Activated CD8-positive, alpha-beta memory T cell treated with anti-CD3 and anti-CD28 coated beads, Interleukin-2, amount 10 ng/mL, durations not matched to agents 7 days and 5 days (primary cell): ENCODE measurements at regions of chr4 and their contacts with region 1.

Region 1: GRCh38 chr4:88533937-88534750 is 10.6 kb upstream of the PYURF start:
- DNase-seq: no peak
- ATAC-seq: no peak
- H3K4me3 Mint-ChIP-seq: no peak overlapping the region
- H3K27ac Mint-ChIP-seq: no peak overlapping the region
- H3K4me1 Mint-ChIP-seq: no peaks in the 10 kb centered on the region
- H3K27me3 Mint-ChIP-seq: no peaks in the 10 kb centered on the region

Region 2: GRCh38 chr4:88456757-88457306 is 77.3 kb before region 1 on chr4 and contains the start of gene HERC5:
- CTCF ChIA-PET with region 1: no interaction called
- DNase-seq: peak; percentile 96
- ATAC-seq: peak; percentile 90
- H3K4me3 Mint-ChIP-seq: peak within 1 kb of the TSS; percentile 81
- H3K27ac Mint-ChIP-seq: peak within 1 kb of the TSS; percentile 100
- H3K4me1 Mint-ChIP-seq: peaks cover 54% of the 10 kb centered on the region
- H3K27me3 Mint-ChIP-seq: no peaks in the 10 kb centered on the region
- total RNA-seq, gene HERC5: 69.6 to 118 TPM

Region 3: GRCh38 chr4:88523325-88524129 is 10.6 kb before region 1 on chr4 and contains the start of gene PYURF:
- CTCF ChIA-PET with region 1: interaction called, 18 read pairs
- DNase-seq: peak; percentile 87
- ATAC-seq: peak; percentile 87
- H3K4me3 Mint-ChIP-seq: peak within 1 kb of the TSS; percentile 91
- H3K27ac Mint-ChIP-seq: peak within 1 kb of the TSS; percentile 83
- H3K4me1 Mint-ChIP-seq: peaks cover 49% of the 10 kb centered on the region
- H3K27me3 Mint-ChIP-seq: no peaks in the 10 kb centered on the region
- total RNA-seq, gene PYURF: 44.3 to 51.2 TPM

Region 4: DNA sequence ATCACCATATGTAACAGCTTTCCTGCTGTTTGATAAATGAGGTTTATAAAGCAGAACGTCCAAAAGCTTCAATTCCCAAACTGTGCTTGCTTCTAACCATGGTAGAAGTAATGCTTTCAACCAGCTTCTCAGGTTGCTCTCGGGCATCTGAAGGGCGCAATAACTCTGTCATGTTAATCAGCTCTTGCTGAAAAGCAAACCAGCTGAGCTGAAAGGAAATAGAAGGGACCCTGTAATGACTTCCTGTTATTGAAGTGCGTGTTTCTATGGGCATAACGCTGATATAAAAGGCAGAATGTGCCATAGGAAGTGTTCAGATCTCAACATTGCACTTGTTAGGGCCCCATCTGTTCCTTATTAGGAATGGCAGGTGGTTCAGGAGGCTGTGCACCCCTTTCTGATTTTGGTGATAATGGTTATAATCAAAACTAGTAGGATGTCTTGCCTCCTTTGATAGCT is 79.3 kb after region 1 on chr4:
- CTCF ChIA-PET with region 1: interaction called, 11 read pairs
- DNase-seq: peak; percentile 62
- ATAC-seq: peak; percentile 80
- H3K4me3 Mint-ChIP-seq: peak overlapping the region; percentile 44
- H3K27ac Mint-ChIP-seq: peak overlapping the region; percentile 70
- H3K4me1 Mint-ChIP-seq: peaks cover 61% of the 10 kb centered on the region
- H3K27me3 Mint-ChIP-seq: no peaks in the 10 kb centered on the region

Region 5: DNA sequence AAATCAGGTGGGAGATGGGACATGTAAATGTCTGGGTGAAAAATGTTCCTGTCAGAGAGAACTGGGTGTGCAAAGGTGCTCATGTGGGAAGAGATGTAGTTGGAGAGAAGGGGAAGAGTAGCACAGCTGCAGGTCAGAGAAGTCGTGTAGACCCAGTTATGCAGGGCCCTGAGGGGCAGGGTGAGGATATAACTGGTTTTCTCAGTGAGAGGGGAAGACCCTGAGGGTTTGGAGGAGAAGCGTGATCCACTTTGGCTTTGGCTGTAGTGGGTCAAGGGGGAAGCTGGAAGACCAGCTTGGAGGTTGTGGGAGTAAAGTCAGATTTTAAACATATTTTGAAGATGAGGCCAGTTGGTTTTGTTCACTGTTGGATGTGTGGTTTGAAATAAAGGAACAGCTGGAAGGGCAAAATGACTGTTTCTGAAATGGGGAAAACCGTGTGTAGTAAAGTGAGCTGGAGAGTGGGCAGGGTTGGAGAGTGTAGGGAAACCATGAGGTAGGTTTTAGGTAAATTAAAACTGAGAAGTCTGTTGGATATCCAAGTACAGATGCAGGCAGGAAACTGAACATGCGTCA is 119.3 kb after region 1 on chr4:
- CTCF ChIA-PET with region 1: interaction called, 17 read pairs
- DNase-seq: no peak
- ATAC-seq: no peak
- H3K4me3 Mint-ChIP-seq: no peak overlapping the region
- H3K27ac Mint-ChIP-seq: no peak overlapping the region
- H3K4me1 Mint-ChIP-seq: peaks cover 2% of the 10 kb centered on the region
- H3K27me3 Mint-ChIP-seq: no peaks in the 10 kb centered on the region

Region 6: DNA sequence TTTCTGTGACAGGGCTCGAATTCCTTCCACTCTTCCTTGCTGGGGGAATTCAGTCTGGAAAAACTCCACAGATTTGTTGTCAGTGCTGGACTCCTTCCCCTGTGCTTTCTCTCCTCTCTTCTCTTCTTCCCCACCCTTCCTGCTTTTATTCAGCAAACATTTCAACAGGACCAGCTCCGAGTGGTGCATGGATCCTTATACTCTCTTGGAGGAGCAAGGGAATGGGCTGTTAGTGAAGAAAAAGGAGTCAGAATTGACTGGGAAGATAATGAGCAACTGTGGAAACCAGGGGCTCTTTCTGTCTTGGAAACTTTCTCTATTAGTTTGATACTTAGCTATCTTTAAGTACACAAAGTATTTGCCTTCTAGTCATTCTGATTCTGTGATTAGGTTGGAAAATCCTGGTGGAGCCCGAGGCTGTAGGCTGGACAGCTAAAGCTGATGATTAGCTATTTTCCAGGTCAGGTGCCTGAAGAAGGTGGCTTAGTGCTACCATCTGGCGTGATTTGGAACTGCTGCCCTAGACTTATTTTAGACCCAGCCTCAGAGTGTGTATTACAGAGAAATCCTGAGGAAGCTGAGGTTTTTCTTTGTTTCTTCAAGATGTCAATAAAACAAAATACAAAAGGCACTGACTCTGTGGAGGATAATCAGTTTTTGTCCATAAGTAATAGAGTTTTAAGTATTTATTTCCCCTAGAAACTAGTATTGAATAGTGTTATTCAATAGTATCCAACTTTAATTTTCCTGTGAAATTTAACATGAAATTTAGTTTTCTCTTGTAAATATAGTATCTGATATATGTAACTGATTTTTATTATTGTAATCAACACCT is 125.1 kb after region 1 on chr4:
- CTCF ChIA-PET with region 1: interaction called, 20 read pairs
- DNase-seq: peak; percentile 47
- ATAC-seq: peak; percentile 86
- H3K4me3 Mint-ChIP-seq: no peak overlapping the region
- H3K27ac Mint-ChIP-seq: no peak overlapping the region
- H3K4me1 Mint-ChIP-seq: peaks cover 13% of the 10 kb centered on the region
- H3K27me3 Mint-ChIP-seq: no peaks in the 10 kb centered on the region

Region 7: DNA sequence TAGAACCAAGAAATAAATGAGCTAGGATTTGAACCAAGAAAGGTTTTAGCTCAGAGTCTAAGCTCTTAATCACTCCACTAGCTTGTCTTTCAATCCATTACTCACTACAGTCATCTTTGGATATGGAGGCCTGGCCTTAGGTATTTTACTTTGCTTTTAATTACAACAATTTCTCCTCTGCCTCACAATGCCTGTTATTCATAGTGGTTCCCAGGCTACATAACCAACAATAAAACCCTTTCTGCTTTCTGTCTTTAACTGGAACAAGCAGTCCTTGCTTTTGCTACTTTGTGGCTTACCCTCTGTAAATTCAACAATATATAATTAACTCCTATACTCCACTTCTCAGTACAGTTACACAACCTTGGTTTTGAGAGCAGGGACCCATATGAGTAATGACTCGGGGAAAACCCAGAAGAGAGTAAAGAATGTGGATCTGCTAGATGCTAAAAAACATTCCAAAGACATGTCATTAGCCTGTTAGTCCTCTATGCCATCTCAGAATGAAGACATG is 258.2 kb after region 1 on chr4:
- CTCF ChIA-PET with region 1: interaction called, 15 read pairs
- DNase-seq: no peak
- ATAC-seq: peak; percentile 58
- H3K4me3 Mint-ChIP-seq: no peak overlapping the region
- H3K27ac Mint-ChIP-seq: no peak overlapping the region
- H3K4me1 Mint-ChIP-seq: peaks cover 18% of the 10 kb centered on the region
- H3K27me3 Mint-ChIP-seq: peaks cover 26% of the 10 kb centered on the region

Region 8: DNA sequence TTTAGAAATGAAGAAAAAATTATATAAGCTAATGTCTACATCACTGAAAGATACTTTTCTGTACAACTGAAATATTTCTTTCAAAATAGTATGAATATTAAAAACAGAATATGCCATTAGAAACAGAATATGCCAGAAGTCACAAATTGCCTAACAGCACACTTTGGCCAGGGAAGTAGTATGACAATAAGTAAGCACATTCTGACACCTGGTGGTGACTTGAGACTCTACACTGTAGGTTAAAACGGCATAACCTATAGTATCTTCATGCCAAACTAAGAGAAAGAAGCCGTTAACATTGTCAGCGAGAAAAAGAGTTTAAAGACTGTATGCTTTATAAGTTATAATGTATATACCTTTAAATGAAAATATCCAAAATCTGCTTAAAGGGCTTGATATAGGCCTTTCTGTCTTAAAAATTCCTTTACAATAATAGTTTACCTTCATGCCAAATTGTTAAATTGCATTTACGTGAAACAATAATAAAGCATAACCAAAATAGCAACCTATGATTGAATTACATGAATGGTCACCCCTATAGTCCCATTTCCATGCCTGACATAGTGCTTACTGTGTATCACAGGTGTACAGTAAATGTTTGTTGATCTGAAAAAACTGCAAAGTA is 490.0 kb after region 1 on chr4:
- CTCF ChIA-PET with region 1: interaction called, 14 read pairs
- DNase-seq: peak; percentile 62
- ATAC-seq: peak; percentile 90
- H3K4me3 Mint-ChIP-seq: no peak overlapping the region
- H3K27ac Mint-ChIP-seq: no peak overlapping the region
- H3K4me1 Mint-ChIP-seq: no peaks in the 10 kb centered on the region
- H3K27me3 Mint-ChIP-seq: no peaks in the 10 kb centered on the region